ENCODE measurements at regions of chr1 and their contacts with region 1.

Region 1: DNA sequence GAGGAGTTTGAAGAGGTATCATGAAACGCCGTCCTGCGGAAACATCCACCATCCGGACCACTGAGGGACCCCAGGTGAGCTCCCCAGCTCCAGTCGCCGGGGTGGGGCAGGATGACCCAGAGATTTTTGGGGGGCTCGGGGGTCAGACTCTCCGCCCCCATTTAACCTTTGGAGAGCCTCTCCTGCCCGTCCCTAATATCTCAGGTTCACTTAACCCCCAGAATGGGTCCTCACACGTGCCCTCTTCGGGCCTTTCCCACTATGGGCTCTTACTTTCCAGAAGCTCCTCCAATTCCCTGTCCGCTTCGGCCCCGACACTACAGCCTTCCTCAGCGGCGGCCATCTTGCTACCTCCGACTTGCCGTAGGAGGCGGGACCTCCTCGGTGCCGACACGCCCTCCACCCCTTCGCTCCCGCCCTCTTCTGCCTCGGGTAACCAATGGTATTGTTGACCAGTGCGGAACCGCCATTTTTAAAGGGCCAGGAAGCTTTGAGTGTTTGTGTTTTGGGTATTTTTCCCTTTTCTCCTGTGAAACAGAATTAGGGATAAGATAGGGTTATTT is at the start of gene PEX19:
- DNase-seq: peak; percentile 91
- H3K4me3 Mint-ChIP-seq: peak within 1 kb of the TSS; percentile 100
- H3K27ac Mint-ChIP-seq: peak within 1 kb of the TSS; percentile 96
- H3K4me1 Mint-ChIP-seq: peaks cover 19% of the 10 kb centered on the region
- H3K27me3 Mint-ChIP-seq: no peaks in the 10 kb centered on the region
- total RNA-seq, gene PEX19: 55.9 and 59.0 TPM in 2 replicates

Region 2: DNA sequence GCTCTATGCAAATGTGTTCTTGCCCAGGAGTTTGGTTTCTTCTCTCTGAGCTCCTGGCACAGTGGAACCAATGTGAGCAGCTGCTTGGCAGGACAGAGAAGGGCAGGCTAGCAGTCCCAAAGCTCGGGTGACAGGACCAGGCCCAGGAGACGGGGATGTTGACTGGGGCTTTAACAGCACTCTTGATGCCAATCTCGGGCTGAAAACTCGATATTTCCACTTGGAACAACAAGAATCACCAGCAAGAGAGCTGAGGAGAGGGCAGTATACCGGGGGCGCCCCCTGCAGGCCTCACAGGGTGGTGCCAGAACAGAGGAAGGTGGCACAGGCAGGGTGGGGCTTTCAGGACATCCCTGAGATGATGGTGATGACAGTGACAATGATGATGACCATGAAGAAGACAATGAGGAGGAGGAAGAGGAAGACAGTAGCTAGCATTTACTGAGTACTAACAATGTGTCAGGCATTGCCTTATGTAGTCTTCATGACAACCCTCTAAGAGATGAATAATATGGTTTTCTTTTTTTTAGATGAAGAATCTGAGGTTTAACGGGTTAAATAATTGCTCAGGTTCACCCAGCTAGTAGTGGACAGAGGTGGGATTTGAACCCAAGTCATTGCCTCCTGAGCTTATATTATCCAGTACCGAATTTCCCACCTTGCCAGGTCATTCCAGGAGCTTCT is 206.2 kb before region 1 on chr1:
- intact Hi-C with region 1: no loop called
- DNase-seq: peak; percentile 47
- H3K4me3 Mint-ChIP-seq: no peak overlapping the region
- H3K27ac Mint-ChIP-seq: no peak overlapping the region
- H3K4me1 Mint-ChIP-seq: peaks cover 16% of the 10 kb centered on the region
- H3K27me3 Mint-ChIP-seq: peaks cover 51% of the 10 kb centered on the region

Region 3: DNA sequence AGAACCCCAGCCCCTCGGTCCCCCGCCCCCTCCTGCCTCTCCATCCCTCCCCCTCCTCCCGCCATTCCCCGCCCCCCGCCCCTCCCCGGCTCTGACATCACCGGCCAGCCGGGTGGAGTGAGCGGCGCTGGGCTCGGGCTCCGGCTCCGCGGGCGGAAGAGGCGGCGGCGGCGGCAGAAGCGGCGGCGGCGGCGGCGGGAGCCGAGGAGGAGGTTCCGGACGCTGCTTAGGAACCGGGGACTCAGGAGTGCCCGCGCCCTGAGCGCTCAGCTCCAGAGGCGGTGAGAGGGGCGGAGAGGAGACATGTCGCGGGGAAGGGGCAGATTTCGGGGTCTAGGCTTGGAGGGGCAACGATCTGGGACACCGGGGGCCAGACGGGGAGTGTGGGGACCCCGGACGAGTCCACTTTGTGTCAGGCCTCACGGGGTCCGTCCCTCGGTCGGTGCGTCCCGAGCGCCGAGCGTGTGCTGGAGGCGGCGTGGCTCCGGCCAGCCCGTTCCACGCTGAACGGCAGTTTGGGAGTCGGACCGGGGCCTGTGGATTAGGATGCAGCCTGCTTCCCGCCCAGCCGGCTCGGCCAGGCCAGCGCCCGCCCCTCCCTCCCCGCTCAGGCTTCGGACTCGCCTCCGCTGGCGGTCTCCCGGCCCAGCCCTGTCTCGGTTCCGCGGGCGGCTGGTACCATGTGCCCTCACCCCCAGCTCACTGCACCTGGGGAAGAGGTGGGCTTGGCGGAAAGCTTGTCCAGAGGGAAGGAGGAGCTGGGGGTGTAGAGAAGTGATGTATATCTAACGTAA is 79.4 kb before region 1 on chr1 and contains the start of gene PEA15:
- intact Hi-C with region 1: loop called (anchors 1 kb)
- DNase-seq: peak; percentile 69
- H3K4me3 Mint-ChIP-seq: peak within 1 kb of the TSS; percentile 85
- H3K27ac Mint-ChIP-seq: peak within 1 kb of the TSS; percentile 87
- H3K4me1 Mint-ChIP-seq: peaks cover 48% of the 10 kb centered on the region
- H3K27me3 Mint-ChIP-seq: no peaks in the 10 kb centered on the region
- total RNA-seq, gene PEA15: 71.2 and 71.3 TPM in 2 replicates

Region 4: GRCh38 chr1:160342953-160343869 is 58.3 kb after region 1 on chr1 and contains the starts of genes COPA and NCSTN:
- intact Hi-C with region 1: loop called (anchors 1 kb)
- DNase-seq: peak; percentile 88
- H3K4me3 Mint-ChIP-seq: peak within 1 kb of the TSS; percentile 100
- H3K27ac Mint-ChIP-seq: peak within 1 kb of the TSS; percentile 99
- H3K4me1 Mint-ChIP-seq: peaks cover 61% of the 10 kb centered on the region
- H3K27me3 Mint-ChIP-seq: no peaks in the 10 kb centered on the region
- total RNA-seq, gene COPA: 123 and 126 TPM in 2 replicates
- total RNA-seq, gene NCSTN: 74.8 and 81.6 TPM in 2 replicates

Region 5: GRCh38 chr1:160366731-160367515 is 82.1 kb after region 1 on chr1 and contains the start of gene NHLH1:
- intact Hi-C with region 1: no loop called
- DNase-seq: no peak
- H3K4me3 Mint-ChIP-seq: no peak within 1 kb of the TSS
- H3K27ac Mint-ChIP-seq: no peak within 1 kb of the TSS
- H3K4me1 Mint-ChIP-seq: no peaks in the 10 kb centered on the region
- H3K27me3 Mint-ChIP-seq: peaks cover 4% of the 10 kb centered on the region
- total RNA-seq, gene NHLH1: 0.52 and 0.66 TPM in 2 replicates

Measured in activated T-helper 1 cell treated with anti-CD3 and anti-CD28 coated beads, Interleukin-12 subunit alpha, Interleukin-12 subunit beta, Interleukin-2, Interleukin-4 antibody, amounts not matched to agents 30 ng/mL and 10 ng/mL and 1 ng/mL, durations not matched to agents 14 hours and 24 hours and 36 hours (primary cell).